Mucosa of descending colon (tissue), 3 donors: ENCODE measurements at regions of chr16 and their contacts with region 1.

Region 1: GRCh38 chr16:25707982-25708583 is 16.3 kb downstream of the HS3ST4 start:
- DNase-seq: peak in 1 of 3 donors; percentile 65
- ATAC-seq: no peak
- H3K4me3 ChIP-seq: no peak overlapping the region
- H3K4me1 ChIP-seq: no peaks in the 10 kb centered on the region
- CTCF ChIP-seq: no peak

Region 2: DNA sequence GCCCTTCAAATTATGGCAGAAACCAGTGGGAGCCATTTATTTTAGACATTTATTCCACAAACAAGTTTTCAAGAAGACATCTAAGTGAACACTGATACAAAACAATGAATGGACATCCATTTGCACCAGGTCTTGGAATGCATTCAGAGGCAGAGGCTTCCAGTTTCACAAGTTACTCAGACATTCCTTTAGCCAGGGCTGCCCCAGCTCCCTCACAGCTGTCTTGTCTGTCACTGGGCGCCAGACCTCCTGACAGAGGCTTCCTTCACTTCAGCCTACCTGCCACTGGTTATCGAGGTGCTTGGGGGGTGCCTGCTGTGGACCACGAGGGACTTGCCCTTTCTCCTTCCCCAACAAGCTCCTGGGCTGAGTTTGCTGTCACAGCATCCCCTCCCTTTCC is 472.1 kb before region 1 on chr16:
- intact Hi-C with region 1: loop called in 1 of 2 experiments (anchors 5 kb)
- DNase-seq: no peak
- ATAC-seq: no peak
- H3K4me3 ChIP-seq: no peak overlapping the region
- H3K4me1 ChIP-seq: no peaks in the 10 kb centered on the region
- CTCF ChIP-seq: no peak

Region 3: GRCh38 chr16:25771216-25771615 is 63.1 kb after region 1 on chr16:
- intact Hi-C with region 1: no loop called
- DNase-seq: no peak
- ATAC-seq: no peak
- H3K4me3 ChIP-seq: no peak overlapping the region
- H3K4me1 ChIP-seq: no peaks in the 10 kb centered on the region
- CTCF ChIP-seq: no peak